Activated T-helper 2 cell treated with anti-CD3 and anti-CD28 coated beads, Interferon-gamma antibody, Interleukin-2, Interleukin-4, amounts not matched to agents 10 μg/mL and 5 μg/mL and 100 μg/mL, durations not matched to agents 14 hours and 24 hours and 36 hours (primary cell): ENCODE measurements at regions of chr9 and their contacts with region 1.

Region 1: GRCh38 chr9:107288696-107289095 is 5.6 kb downstream of the RAD23B start:
- DNase-seq: no peak
- H3K4me3 Mint-ChIP-seq: no peak overlapping the region
- H3K27ac Mint-ChIP-seq: peak overlapping the region; percentile 91
- H3K4me1 Mint-ChIP-seq: peaks cover 56% of the 10 kb centered on the region
- H3K27me3 Mint-ChIP-seq: no peaks in the 10 kb centered on the region

Region 2: GRCh38 chr9:107213561-107214028 is 75.1 kb before region 1 on chr9:
- intact Hi-C with region 1: loop called (anchors 2 kb)
- DNase-seq: peak; percentile 9
- H3K4me3 Mint-ChIP-seq: no peak overlapping the region
- H3K27ac Mint-ChIP-seq: no peak overlapping the region
- H3K4me1 Mint-ChIP-seq: peaks cover 15% of the 10 kb centered on the region
- H3K27me3 Mint-ChIP-seq: peaks cover 8% of the 10 kb centered on the region

Region 3: DNA sequence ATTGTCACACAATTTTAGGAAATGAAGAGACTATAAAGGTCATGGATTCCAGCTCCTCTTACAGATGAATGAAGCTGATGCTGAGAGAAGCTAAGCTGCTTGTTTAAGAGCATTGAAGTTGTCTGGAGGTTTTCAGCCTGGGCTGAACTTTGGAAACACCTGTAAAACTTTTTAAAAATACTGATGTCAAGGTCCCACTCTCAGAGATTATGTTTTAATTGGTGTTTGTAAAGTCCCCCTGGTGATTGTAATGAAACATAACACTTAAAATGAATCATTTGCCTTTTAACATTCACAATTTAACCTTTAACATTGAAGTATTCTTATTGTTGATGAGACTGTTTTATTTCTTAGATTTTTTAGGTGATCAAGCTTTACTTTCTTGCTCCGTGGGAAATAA is 10.7 kb after region 1 on chr9:
- intact Hi-C with region 1: loop called (anchors 1 kb)
- DNase-seq: no peak
- H3K4me3 Mint-ChIP-seq: no peak overlapping the region
- H3K27ac Mint-ChIP-seq: no peak overlapping the region
- H3K4me1 Mint-ChIP-seq: peaks cover 33% of the 10 kb centered on the region
- H3K27me3 Mint-ChIP-seq: no peaks in the 10 kb centered on the region

Region 4: DNA sequence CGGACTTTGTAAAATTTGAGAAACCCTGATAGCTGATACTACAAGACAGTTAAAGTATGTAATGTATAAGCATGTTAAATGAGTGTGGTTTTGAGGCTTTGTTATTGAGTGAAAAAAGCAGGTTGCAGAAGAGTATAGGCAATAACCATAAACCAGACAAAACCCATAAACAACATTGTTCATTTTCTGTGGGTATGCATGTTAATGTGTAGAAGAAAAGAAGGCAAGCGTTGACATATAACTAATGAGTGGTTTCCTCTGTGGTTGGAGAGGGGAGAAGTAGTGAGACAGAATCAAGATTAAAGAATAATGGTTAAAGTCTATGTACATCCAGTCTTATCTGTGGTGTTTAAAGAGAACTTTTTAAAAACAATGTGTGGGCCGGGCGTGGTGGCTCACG is 20.6 kb after region 1 on chr9:
- intact Hi-C with region 1: loop called (anchors 1 kb)
- DNase-seq: no peak
- H3K4me3 Mint-ChIP-seq: peak overlapping the region; percentile 13
- H3K27ac Mint-ChIP-seq: peak overlapping the region; percentile 44
- H3K4me1 Mint-ChIP-seq: peaks cover 52% of the 10 kb centered on the region
- H3K27me3 Mint-ChIP-seq: no peaks in the 10 kb centered on the region